Dorsolateral prefrontal cortex (tissue), 120 donors: ENCODE measurements at regions of chr11 and their contacts with region 1.

Region 1: GRCh38 chr11:65506770-65507505 is 8.1 kb downstream of the MALAT1 start:
- DNase-seq: peak in 5 of 10 donors; percentile 26 to 60 (median 34)
- H3K4me3 ChIP-seq: peak overlapping the region in 57 of 59 donors; percentile 7 to 100 (median 91)
- H3K27ac ChIP-seq: peak overlapping the region; percentile 27 to 100 (median 100)
- H3K27me3 ChIP-seq: no peaks in the 10 kb centered on the region
- CTCF ChIP-seq: no peak

Region 2: GRCh38 chr11:65382033-65382807 is 124.7 kb before region 1 on chr11 and contains the start of gene SLC25A45:
- intact Hi-C with region 1: loop called (anchors 2 to 5 kb)
- DNase-seq: peak; percentile 63 to 96 (median 90)
- H3K4me3 ChIP-seq: peak within 1 kb of the TSS; percentile 34 to 70 (median 52)
- H3K27ac ChIP-seq: peak within 1 kb of the TSS; percentile 90 to 100 (median 99)
- H3K27me3 ChIP-seq: no peaks in the 10 kb centered on the region
- CTCF ChIP-seq: peak; percentile 55 to 98 (median 90)
- total RNA-seq, gene SLC25A45: 3.6 to 18.2 (median 9.0) TPM

Region 3: DNA sequence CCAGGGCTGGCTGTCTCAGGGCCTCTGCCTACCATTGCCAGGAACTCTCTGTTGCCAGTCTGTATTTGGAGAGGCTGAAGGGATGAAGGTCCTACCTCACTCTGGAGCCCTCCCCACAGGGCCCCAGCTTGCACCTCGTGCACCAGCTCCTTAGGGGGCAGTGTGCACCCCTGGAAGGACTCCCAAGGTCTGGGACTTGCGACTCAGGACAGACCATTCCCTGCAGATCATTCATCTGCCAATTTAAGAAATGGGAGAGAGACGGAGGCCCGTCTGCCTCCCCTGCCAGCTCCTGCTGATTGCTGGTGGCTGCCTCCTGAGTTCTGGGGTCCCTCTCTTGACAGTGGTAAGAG is 35.6 kb before region 1 on chr11:
- intact Hi-C with region 1: loop called (anchors 5 kb)
- DNase-seq: peak in 8 of 10 donors; percentile 40 to 76 (median 64)
- H3K4me3 ChIP-seq: peak overlapping the region in 50 of 59 donors; percentile 1 to 52 (median 28)
- H3K27ac ChIP-seq: peak overlapping the region; percentile 79 to 100 (median 97)
- H3K27me3 ChIP-seq: no peaks in the 10 kb centered on the region
- CTCF ChIP-seq: peak in 54 of 56 donors; percentile 31 to 78 (median 65)